GM18951 (cell line): ENCODE measurements at regions of chr20 and their contacts with region 1.

Region 1: GRCh38 chr20:19784511-19785172 is 26.6 kb downstream of the RIN2 start:
- POLR2A ChIP-seq: no peak

Region 2: DNA sequence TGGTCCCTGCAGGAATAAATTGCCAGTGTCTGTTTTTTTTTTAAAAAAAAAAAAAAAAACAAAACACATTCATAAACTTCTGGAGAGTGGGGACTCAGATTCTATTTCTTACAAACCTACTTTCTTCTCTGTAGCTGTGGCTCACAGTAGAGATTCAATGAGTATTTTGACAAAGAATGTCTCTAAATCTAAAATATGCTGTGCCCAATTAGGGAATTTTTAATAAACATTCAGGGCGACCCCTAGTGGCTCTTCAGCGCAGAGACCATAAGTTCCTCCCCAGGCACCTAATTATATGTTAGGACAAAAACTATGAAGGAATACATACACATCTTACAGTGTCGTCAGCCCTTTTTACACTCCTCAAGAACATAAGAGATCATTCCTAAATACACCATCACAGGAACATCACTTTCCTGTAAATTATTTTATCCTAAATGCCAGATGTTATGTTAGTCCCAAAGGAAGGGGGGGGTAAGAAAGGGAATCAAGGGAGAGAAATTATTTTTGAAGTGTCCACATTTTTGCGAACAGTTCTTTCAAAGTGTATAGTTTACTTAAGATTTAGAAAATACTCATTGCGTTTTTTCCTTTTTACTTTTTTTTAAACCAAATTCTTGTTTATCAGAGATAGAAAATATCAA is 210.7 kb after region 1 on chr20:
- in situ Hi-C with region 1: loop called (anchors 25 kb)
- POLR2A ChIP-seq: no peak